ENCODE measurements at regions of chr19 and their contacts with region 1.

Region 1: GRCh38 chr19:40716655-40717324 is at the starts of genes COQ8B and ITPKC:
- DNase-seq: peak; percentile 100
- H3K4me3 Mint-ChIP-seq: peak within 1 kb of the TSS; percentile 93
- H3K27ac Mint-ChIP-seq: peak within 1 kb of the TSS; percentile 97
- H3K4me1 Mint-ChIP-seq: peaks cover 54% of the 10 kb centered on the region
- H3K27me3 Mint-ChIP-seq: no peaks in the 10 kb centered on the region
- total RNA-seq, gene COQ8B: 31.7 to 36.3 TPM
- total RNA-seq, gene ITPKC: 6.4 TPM

Region 2: GRCh38 chr19:40614622-40615411 is 102.0 kb before region 1 on chr19:
- CTCF ChIA-PET with region 1: interaction called, 3 read pairs
- POLR2A ChIA-PET with region 1: no interaction called
- intact Hi-C with region 1: loop called (anchors 1 kb)
- DNase-seq: peak; percentile 98
- H3K4me3 Mint-ChIP-seq: peak overlapping the region; percentile 89
- H3K27ac Mint-ChIP-seq: peak overlapping the region; percentile 97
- H3K4me1 Mint-ChIP-seq: peaks cover 54% of the 10 kb centered on the region
- H3K27me3 Mint-ChIP-seq: no peaks in the 10 kb centered on the region

Region 3: GRCh38 chr19:40697007-40697406 is 19.8 kb before region 1 on chr19:
- CTCF ChIA-PET with region 1: no interaction called
- POLR2A ChIA-PET with region 1: no interaction called
- intact Hi-C with region 1: no loop called
- DNase-seq: no peak
- H3K4me3 Mint-ChIP-seq: no peak overlapping the region
- H3K27ac Mint-ChIP-seq: no peak overlapping the region
- H3K4me1 Mint-ChIP-seq: no peaks in the 10 kb centered on the region
- H3K27me3 Mint-ChIP-seq: no peaks in the 10 kb centered on the region

Region 4: DNA sequence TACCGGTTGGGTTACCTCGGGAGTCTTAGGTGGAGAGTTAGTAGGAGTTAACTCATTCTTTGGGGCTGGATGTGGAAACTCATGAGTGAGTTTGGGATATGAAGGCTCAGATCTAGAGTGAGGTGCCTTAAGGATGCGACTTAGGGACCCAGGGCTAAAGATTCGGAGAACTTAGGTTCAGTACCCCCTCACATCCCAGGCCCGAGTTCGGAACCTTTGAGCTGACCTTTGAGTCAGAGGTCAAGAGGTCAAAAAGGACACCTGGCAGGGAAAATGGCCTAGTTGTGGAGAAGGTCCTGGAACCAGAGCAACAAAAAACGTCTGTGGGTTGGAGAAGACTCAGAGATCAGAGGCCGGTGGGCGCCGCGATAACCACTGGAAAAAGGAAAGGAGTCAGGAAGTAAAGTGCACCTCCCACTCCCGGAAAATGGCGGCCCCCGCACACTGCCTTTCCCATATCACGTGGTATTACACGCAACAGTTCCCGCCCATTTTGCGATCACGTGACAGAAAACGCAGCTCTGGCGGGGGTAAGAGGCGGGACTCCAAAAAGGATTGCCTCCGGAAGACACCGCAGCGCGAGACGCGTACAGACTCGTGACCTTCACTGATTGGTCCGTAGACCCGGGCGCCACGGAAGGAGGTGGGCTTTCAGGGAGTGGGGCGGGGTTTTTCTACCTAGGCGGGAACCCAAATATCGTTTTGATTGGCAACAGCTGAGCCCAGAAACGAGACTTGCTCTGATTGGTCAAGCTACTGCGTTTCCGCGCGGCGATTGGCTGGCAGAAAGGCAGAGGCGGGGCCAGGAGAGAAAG is 33.5 kb after region 1 on chr19 and contains the start of gene ACTMAP:
- CTCF ChIA-PET with region 1: interaction called, 5 read pairs
- POLR2A ChIA-PET with region 1: interaction called, 16 read pairs
- intact Hi-C with region 1: loop called (anchors 1 kb)
- DNase-seq: peak; percentile 100
- H3K4me3 Mint-ChIP-seq: peak within 1 kb of the TSS; percentile 94
- H3K27ac Mint-ChIP-seq: peak within 1 kb of the TSS; percentile 97
- H3K4me1 Mint-ChIP-seq: peaks cover 32% of the 10 kb centered on the region
- H3K27me3 Mint-ChIP-seq: no peaks in the 10 kb centered on the region
- total RNA-seq, gene ACTMAP: 14.1 to 15.8 TPM

Region 5: GRCh38 chr19:40798223-40798996 is 81.6 kb after region 1 on chr19:
- CTCF ChIA-PET with region 1: no interaction called
- POLR2A ChIA-PET with region 1: interaction called, 3 read pairs
- intact Hi-C with region 1: loop called (anchors 1 kb)
- DNase-seq: peak; percentile 100
- H3K4me3 Mint-ChIP-seq: peak overlapping the region; percentile 91
- H3K27ac Mint-ChIP-seq: peak overlapping the region; percentile 93
- H3K4me1 Mint-ChIP-seq: peaks cover 49% of the 10 kb centered on the region
- H3K27me3 Mint-ChIP-seq: no peaks in the 10 kb centered on the region

Region 6: DNA sequence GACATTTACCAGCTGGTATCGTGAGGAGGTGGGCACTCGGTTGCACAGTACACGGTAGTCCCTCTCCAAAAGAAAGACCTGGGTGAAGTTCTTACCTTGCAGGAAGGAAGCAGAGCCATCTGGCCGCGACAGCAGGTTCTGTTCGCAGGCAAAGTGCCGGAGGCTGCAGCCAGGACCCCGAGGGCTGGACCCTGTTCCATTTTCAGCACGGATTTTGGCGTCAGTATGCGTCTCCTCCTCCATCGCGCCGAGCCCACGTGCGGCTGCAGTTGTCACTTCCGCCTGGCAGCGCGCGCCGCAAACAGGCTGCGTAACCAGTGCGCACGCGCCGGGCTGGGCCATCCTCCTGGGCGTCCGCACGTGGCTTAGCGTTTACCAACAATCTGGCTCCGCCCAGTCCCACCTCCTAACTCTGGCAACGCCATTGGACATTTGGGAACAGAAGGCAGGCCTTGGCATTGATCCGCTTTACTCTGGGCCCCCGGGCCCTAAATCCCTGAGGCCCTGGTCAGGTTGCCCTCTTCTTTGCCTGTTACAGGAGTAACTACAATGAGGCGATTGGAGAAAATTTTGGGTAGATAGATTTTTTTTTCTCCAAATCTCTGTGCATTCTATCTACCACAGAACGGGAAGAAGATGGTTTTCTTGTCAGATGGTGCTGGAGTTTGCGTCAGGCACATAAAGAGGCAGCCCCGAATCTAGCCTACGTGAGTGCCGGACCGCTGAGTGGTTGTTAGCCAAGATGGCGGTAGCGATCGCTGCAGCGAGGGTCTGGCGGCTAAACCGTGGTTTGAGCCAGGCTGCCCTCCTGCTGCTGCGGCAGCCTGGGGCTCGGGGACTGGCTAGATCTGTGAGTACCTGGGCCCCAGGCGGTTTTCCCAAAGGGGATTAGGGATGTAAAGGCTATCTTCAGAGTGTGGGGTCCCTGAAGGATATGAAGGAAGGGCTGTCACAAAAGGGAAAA is 680.6 kb after region 1 on chr19 and contains the starts of genes BCKDHA and EXOSC5:
- CTCF ChIA-PET with region 1: no interaction called
- POLR2A ChIA-PET with region 1: no interaction called
- intact Hi-C with region 1: loop called (anchors 1 kb)
- DNase-seq: peak; percentile 99
- H3K4me3 Mint-ChIP-seq: peak within 1 kb of the TSS; percentile 96
- H3K27ac Mint-ChIP-seq: peak within 1 kb of the TSS; percentile 98
- H3K4me1 Mint-ChIP-seq: peaks cover 41% of the 10 kb centered on the region
- H3K27me3 Mint-ChIP-seq: no peaks in the 10 kb centered on the region
- total RNA-seq, gene BCKDHA: 17.4 to 23.2 TPM
- total RNA-seq, gene EXOSC5: 43.0 to 45.5 TPM

Measured in activated CD4-positive, alpha-beta memory T cell treated with anti-CD3 and anti-CD28 coated beads for 36 hours (primary cell).